Gastrocnemius medialis (tissue), 4 donors: ENCODE measurements at regions of chr2 and their contacts with region 1.

Region 1: DNA sequence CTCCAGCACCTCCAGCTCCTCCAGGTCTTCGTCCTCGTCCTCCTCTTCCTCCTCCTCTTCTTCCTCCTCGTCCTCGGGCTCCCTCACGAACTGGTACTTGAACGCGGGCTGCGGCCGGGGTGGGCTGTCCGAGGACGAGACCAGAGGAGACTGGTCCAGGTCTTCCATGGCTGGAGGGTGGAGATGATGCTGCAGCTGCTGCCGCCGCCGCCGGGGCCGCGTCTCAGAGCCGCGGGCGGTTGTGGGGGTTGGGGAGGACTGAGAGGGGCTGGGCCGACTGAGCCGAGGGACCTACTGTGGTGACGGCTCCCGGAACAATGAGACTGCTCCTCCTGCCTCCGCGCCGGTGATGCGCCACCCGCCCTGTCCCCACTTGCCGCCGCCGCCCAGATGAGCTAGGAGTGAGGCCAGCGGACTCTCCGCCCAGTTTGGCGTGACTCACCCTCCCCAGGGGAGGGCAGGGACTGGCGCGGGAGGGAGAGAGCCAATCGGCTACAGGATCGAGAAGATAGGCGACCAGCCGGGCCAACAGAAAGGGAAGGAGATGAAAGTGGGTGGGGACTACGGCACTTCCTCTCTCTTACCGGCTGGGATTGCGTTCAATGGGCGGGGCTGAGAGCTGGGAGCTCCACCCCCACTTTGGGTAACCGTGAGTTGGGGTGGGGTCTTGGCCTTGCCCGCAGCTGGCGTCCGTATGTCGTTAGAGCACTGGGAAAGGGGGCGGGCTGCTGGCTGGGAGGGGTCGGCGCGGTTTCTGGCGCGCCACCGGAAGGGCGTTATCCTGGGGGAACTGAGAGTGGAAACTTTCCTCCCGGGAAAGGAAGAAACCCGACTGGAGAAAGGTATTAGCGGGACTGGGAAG is at the start of gene RTN4:
- DNase-seq: peak; percentile 98 to 99
- ATAC-seq: peak; percentile 92 to 94
- H3K4me3 ChIP-seq: peak within 1 kb of the TSS; percentile 75 to 92 (median 87)
- H3K27ac ChIP-seq: peak within 1 kb of the TSS; percentile 94 to 98 (median 96)
- H3K4me1 ChIP-seq: peaks cover 14 to 18% of the 10 kb centered on the region in 2 donors
- H3K27me3 ChIP-seq: peaks cover 0 to 8% (median 0%) of the 10 kb centered on the region in 3 donors
- CTCF ChIP-seq: peak in 3 of 5 experiments; percentile 5 to 23 (median 22)
- POLR2A ChIP-seq: peak; percentile 95 to 96
- total RNA-seq, gene RTN4: 183 to 259 (median 244) TPM

Region 2: GRCh38 chr2:54115284-54116137 is 934.9 kb before region 1 on chr2 and contains the start of gene ACYP2:
- in situ Hi-C with region 1: loop called in 1 of 4 experiments (anchors 25 kb)
- intact Hi-C with region 1: no loop called
- DNase-seq: peak; percentile 94 to 95
- ATAC-seq: peak; percentile 96 to 98
- H3K4me3 ChIP-seq: peak within 1 kb of the TSS; percentile 70 to 89 (median 76)
- H3K27ac ChIP-seq: peak within 1 kb of the TSS; percentile 97 to 99 (median 98)
- H3K4me1 ChIP-seq: peaks cover 10 to 16% of the 10 kb centered on the region in 2 donors
- H3K27me3 ChIP-seq: no peaks in the 10 kb centered on the region
- CTCF ChIP-seq: no peak
- POLR2A ChIP-seq: peak; percentile 83 to 85
- total RNA-seq, gene ACYP2: 52.9 to 121 (median 107) TPM

Region 3: DNA sequence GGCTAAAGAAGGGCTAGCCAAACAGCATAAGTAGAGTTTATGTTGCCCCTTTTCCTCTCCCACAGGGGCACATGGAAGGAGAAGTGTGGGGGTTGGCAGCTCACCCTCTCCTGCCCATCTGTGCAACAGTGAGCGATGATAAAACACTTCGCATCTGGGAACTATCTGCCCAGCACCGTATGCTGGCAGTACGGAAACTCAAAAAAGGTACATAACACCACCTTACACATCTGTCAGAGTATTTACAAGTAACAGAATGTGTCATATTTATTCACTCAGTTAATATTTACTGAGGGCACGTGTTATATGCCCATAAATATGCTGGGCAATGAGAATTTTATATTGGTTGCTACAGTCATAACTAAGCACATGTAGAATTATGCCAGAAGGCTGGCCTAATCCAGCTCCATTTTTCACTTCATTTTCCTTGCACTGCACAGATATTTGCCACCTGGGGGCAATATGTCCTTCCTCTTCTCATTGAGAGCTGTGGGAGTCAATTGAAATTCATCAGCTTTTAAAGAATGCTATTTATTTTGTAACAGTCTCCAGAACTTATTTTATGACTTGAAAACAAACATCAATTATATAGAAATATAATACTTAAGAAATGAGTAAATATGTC is 150.7 kb before region 1 on chr2:
- in situ Hi-C with region 1: no loop called
- intact Hi-C with region 1: loop called (anchors 10 kb)
- DNase-seq: no peak
- ATAC-seq: peak; percentile 51 to 64
- H3K4me3 ChIP-seq: no peak overlapping the region
- H3K27ac ChIP-seq: peak overlapping the region in 3 of 4 donors; percentile 22 to 72 (median 69)
- H3K4me1 ChIP-seq: peaks cover 16 to 22% of the 10 kb centered on the region in 2 donors
- H3K27me3 ChIP-seq: no peaks in the 10 kb centered on the region
- CTCF ChIP-seq: peak; percentile 21 to 66 (median 44)
- POLR2A ChIP-seq: no peak

Region 4: GRCh38 chr2:55010149-55010591 is 40.2 kb before region 1 on chr2:
- in situ Hi-C with region 1: no loop called
- intact Hi-C with region 1: loop called (anchors 1 kb)
- DNase-seq: peak; percentile 76 to 82
- ATAC-seq: peak; percentile 85 to 88
- H3K4me3 ChIP-seq: peak overlapping the region; percentile 50 to 63 (median 54)
- H3K27ac ChIP-seq: peak overlapping the region; percentile 89 to 94 (median 91)
- H3K4me1 ChIP-seq: peaks cover 61 to 62% of the 10 kb centered on the region in 2 donors
- H3K27me3 ChIP-seq: no peaks in the 10 kb centered on the region
- CTCF ChIP-seq: no peak
- POLR2A ChIP-seq: peak; percentile 63 to 80

Region 5: GRCh38 chr2:55111570-55112228 is 61.3 kb after region 1 on chr2:
- in situ Hi-C with region 1: no loop called
- intact Hi-C with region 1: loop called (anchors 2 kb)
- DNase-seq: peak; percentile 52 to 75
- ATAC-seq: peak; percentile 74 to 77
- H3K4me3 ChIP-seq: no peak overlapping the region
- H3K27ac ChIP-seq: peak overlapping the region; percentile 64 to 75 (median 72)
- H3K4me1 ChIP-seq: peaks cover 20 to 24% of the 10 kb centered on the region in 2 donors
- H3K27me3 ChIP-seq: no peaks in the 10 kb centered on the region
- CTCF ChIP-seq: no peak
- POLR2A ChIP-seq: no peak

Region 6: DNA sequence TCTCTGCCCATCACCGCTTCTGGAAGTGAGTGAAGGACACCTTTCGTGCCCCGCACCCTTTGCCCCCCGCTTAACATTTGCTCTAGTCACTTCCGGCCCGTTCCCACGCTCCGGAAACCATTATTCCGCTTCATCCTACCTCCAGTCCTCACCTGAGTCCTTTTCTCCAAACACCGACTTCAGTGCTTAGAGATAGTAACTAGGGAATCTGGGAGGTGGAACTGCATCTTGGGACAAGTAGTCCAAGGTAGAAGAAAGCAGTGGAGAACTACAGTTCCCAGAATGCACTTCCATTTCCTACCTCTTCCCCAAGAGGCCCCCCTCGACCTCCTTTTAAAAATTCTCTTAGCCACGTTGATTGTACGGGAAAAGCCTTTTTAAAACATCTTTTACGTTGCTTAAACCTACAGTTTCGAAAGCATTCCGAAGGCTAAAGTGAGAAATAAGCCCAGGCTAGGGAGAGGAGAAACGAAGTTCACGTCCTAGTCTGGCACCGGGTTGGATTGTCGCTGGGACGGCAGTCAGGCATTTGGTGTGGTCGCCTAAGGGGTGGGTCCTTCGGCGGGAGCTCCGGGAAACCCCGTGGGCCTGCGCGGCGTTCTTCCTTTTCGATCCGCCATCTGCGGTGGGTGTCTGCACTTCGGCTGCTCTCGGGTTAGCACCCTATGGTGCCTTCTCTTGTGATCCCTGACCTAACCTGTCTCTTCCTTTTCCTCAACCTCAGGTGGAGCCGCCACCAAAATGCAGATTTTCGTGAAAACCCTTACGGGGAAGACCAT is 181.9 kb after region 1 on chr2 and contains the starts of genes CLHC1 and RPS27A:
- in situ Hi-C with region 1: no loop called
- intact Hi-C with region 1: loop called (anchors 5 kb)
- DNase-seq: peak; percentile 86 to 87
- ATAC-seq: peak; percentile 98
- H3K4me3 ChIP-seq: peak within 1 kb of the TSS; percentile 72 to 96 (median 87)
- H3K27ac ChIP-seq: peak within 1 kb of the TSS; percentile 89 to 96 (median 92)
- H3K4me1 ChIP-seq: peaks cover 23 to 24% of the 10 kb centered on the region in 2 donors
- H3K27me3 ChIP-seq: no peaks in the 10 kb centered on the region
- CTCF ChIP-seq: peak in 2 of 5 experiments; percentile 9 to 16
- POLR2A ChIP-seq: peak; percentile 85 to 87
- total RNA-seq, gene CLHC1: 0.46 to 4.9 (median 0.85) TPM in 3 of 4 donors, not detected in the other
- total RNA-seq, gene RPS27A: 884 to 1,266 (median 965) TPM